Ascending aorta (tissue), 2 donors: ENCODE measurements at regions of chr11 and their contacts with region 1.

Region 1: DNA sequence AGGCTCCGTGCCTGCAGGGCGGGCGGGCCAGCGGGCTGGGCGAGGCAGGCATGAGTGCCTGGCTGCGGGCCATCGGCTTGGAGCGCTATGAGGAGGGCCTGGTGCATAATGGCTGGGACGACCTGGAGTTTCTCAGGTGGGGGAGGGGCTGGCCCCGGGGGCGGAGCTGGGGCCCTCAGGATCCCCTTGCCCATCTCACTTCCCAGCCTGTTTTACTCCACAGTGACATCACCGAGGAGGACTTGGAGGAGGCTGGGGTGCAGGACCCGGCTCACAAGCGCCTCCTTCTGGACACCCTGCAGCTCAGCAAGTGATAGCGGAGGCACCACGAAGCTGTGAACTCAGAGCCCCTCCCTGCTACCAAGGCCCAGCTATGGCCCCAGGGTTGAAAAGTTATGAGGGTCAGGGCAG is 5.9 kb downstream of the PHOX2A start:
- DNase-seq: no peak
- H3K4me3 ChIP-seq: no peak overlapping the region
- H3K27ac ChIP-seq: no peak overlapping the region
- H3K4me1 ChIP-seq: peaks cover 7 to 18% of the 10 kb centered on the region in 2 donors
- H3K27me3 ChIP-seq: peaks cover 6% of the 10 kb centered on the region
- CTCF ChIP-seq: peak; percentile 34 to 67 (median 59)

Region 2: GRCh38 chr11:72102946-72103753 is 134.9 kb before region 1 on chr11 and contains the start of gene LAMTOR1:
- intact Hi-C with region 1: loop called (anchors 5 kb)
- DNase-seq: peak; percentile 97 to 100
- H3K4me3 ChIP-seq: peak within 1 kb of the TSS; percentile 78 to 80
- H3K27ac ChIP-seq: peak within 1 kb of the TSS; percentile 86 to 94
- H3K4me1 ChIP-seq: peaks cover 10 to 18% of the 10 kb centered on the region in 2 donors
- H3K27me3 ChIP-seq: no peaks in the 10 kb centered on the region
- CTCF ChIP-seq: peak; percentile 31 to 67 (median 58)
- total RNA-seq, gene LAMTOR1: 148 TPM

Region 3: GRCh38 chr11:72189461-72190275 is 48.4 kb before region 1 on chr11:
- intact Hi-C with region 1: no loop called
- DNase-seq: no peak
- H3K4me3 ChIP-seq: no peak overlapping the region
- H3K27ac ChIP-seq: no peak overlapping the region
- H3K4me1 ChIP-seq: no peaks in the 10 kb centered on the region
- H3K27me3 ChIP-seq: no peaks in the 10 kb centered on the region
- CTCF ChIP-seq: no peak

Region 4: GRCh38 chr11:72430741-72431570 is 192.9 kb after region 1 on chr11:
- intact Hi-C with region 1: loop called (anchors 5 kb)
- DNase-seq: no peak
- H3K4me3 ChIP-seq: no peak overlapping the region
- H3K27ac ChIP-seq: no peak overlapping the region
- H3K4me1 ChIP-seq: peaks cover 0 to 13% of the 10 kb centered on the region in 2 donors
- H3K27me3 ChIP-seq: no peaks in the 10 kb centered on the region
- CTCF ChIP-seq: peak; percentile 51 to 69 (median 56)